ENCODE measurements at regions of chr15 and their contacts with region 1.

Region 1: GRCh38 chr15:98421419-98422129 is 226.8 kb upstream of the IGF1R start:
- DNase-seq: peak; percentile 47 to 95 (median 78)

Region 2: GRCh38 chr15:97903971-97904572 is 517.5 kb before region 1 on chr15:
- intact Hi-C with region 1: loop called (anchors 5 kb)
- DNase-seq: peak; percentile 46 to 95 (median 72)

Region 3: GRCh38 chr15:98311566-98312188 is 109.9 kb before region 1 on chr15:
- intact Hi-C with region 1: loop called (anchors 1 kb)
- DNase-seq: peak in 8 of 10 donors; percentile 27 to 86 (median 74)

Region 4: GRCh38 chr15:98442379-98442833 is 20.8 kb after region 1 on chr15:
- intact Hi-C with region 1: no loop called
- DNase-seq: peak in 4 of 10 donors; percentile 41 to 66 (median 47)

Measured in posterior cingulate gyrus (tissue), 11 donors.